ENCODE measurements at regions of chr3 and their contacts with region 1.

Region 1: GRCh38 chr3:45210308-45211041 is 15.6 kb downstream of the TMEM158 start:
- DNase-seq: peak; percentile 47 to 70
- ATAC-seq: peak; percentile 96 to 98
- H3K4me3 ChIP-seq: no peak overlapping the region
- H3K27ac ChIP-seq: peak overlapping the region; percentile 58 to 84; a peak in 4 of 6 replicates
- H3K4me1 ChIP-seq: peaks cover 8% of the 10 kb centered on the region; the same call in 2 of the 3 replicates
- CTCF ChIP-seq: peak; percentile 72
- EP300 ChIP-seq: no peak
- POLR2A ChIP-seq: no peak
- RAD21 ChIP-seq: peak; percentile 84 to 86

Region 2: GRCh38 chr3:45055411-45056143 is 154.9 kb before region 1 on chr3:
- CTCF ChIA-PET with region 1: interaction called, 339 read pairs
- POLR2A ChIA-PET with region 1: no interaction called
- DNase-seq: peak; percentile 23 to 49
- ATAC-seq: peak in 1 of 2 experiments; percentile 70; a peak in 3 of 6 replicates
- H3K4me3 ChIP-seq: no peak overlapping the region
- H3K27ac ChIP-seq: peak overlapping the region; percentile 42 to 62; a peak in 5 of 6 replicates
- H3K4me1 ChIP-seq: peaks cover 20% of the 10 kb centered on the region
- CTCF ChIP-seq: peak; percentile 6; the same call in 1 of the 3 replicates
- EP300 ChIP-seq: no peak
- POLR2A ChIP-seq: no peak
- RAD21 ChIP-seq: peak in 1 of 2 experiments; percentile 27; a peak in 1 of 5 replicates

Region 3: DNA sequence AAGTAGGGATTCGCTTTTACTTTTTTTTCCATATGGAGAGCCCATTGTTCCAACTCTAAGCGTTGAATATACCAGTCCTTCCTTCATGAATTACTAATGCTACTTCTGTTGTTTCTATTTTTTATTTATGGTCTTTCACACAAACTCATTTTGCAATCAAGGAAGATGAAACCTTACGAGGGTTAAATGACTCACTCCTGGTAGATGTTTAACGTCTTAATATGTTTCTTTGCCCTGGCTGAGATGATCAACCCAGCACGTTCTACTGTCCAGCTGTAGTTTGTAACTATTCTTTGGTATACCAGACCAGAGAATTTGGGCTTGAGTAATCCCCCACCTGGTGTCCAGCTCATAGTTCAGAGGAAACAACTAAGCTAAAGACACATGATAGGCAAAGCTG is 87.4 kb before region 1 on chr3:
- CTCF ChIA-PET with region 1: interaction called, 16 read pairs
- POLR2A ChIA-PET with region 1: no interaction called
- DNase-seq: peak; percentile 41 to 74
- ATAC-seq: peak; percentile 83 to 84
- H3K4me3 ChIP-seq: no peak overlapping the region
- H3K27ac ChIP-seq: peak overlapping the region; percentile 72 to 85
- H3K4me1 ChIP-seq: peaks cover 57% of the 10 kb centered on the region
- CTCF ChIP-seq: no peak
- EP300 ChIP-seq: peak; percentile 65 to 68; a peak in 3 of 5 replicates
- POLR2A ChIP-seq: no peak
- RAD21 ChIP-seq: peak in 1 of 2 experiments; percentile 32; a peak in 1 of 5 replicates

Region 4: GRCh38 chr3:45163481-45163880 is 47.0 kb before region 1 on chr3:
- CTCF ChIA-PET with region 1: interaction called, 10 read pairs
- POLR2A ChIA-PET with region 1: interaction called, 6 read pairs
- DNase-seq: no peak
- ATAC-seq: no peak
- H3K4me3 ChIP-seq: no peak overlapping the region
- H3K27ac ChIP-seq: no peak overlapping the region
- H3K4me1 ChIP-seq: peaks cover 19% of the 10 kb centered on the region
- CTCF ChIP-seq: no peak
- EP300 ChIP-seq: no peak
- POLR2A ChIP-seq: no peak
- RAD21 ChIP-seq: no peak

Region 5: GRCh38 chr3:45199837-45200648 is 10.4 kb before region 1 on chr3:
- CTCF ChIA-PET with region 1: interaction called, 31 read pairs
- POLR2A ChIA-PET with region 1: no interaction called
- DNase-seq: peak; percentile 65 to 87
- ATAC-seq: peak; percentile 88 to 90
- H3K4me3 ChIP-seq: no peak overlapping the region
- H3K27ac ChIP-seq: peak overlapping the region; percentile 71 to 83
- H3K4me1 ChIP-seq: peaks cover 33% of the 10 kb centered on the region
- CTCF ChIP-seq: no peak
- EP300 ChIP-seq: peak in 1 of 2 experiments; percentile 26; a peak in 1 of 5 replicates
- POLR2A ChIP-seq: no peak
- RAD21 ChIP-seq: no peak

Region 6: GRCh38 chr3:45659661-45660559 is 449.4 kb after region 1 on chr3:
- CTCF ChIA-PET with region 1: no interaction called
- POLR2A ChIA-PET with region 1: no interaction called
- DNase-seq: peak; percentile 65 to 82
- ATAC-seq: peak; percentile 49 to 62; a peak in 4 of 6 replicates
- H3K4me3 ChIP-seq: no peak overlapping the region
- H3K27ac ChIP-seq: peak overlapping the region; percentile 44 to 56
- H3K4me1 ChIP-seq: peaks cover 40% of the 10 kb centered on the region
- CTCF ChIP-seq: peak; percentile 55
- EP300 ChIP-seq: peak in 1 of 2 experiments; percentile 21; a peak in 1 of 5 replicates
- POLR2A ChIP-seq: no peak
- RAD21 ChIP-seq: peak; percentile 53 to 71

Measured in A549 (cell line).